Dorsolateral prefrontal cortex (tissue), 120 donors: ENCODE measurements at regions of chr9 and their contacts with region 1.

Region 1: DNA sequence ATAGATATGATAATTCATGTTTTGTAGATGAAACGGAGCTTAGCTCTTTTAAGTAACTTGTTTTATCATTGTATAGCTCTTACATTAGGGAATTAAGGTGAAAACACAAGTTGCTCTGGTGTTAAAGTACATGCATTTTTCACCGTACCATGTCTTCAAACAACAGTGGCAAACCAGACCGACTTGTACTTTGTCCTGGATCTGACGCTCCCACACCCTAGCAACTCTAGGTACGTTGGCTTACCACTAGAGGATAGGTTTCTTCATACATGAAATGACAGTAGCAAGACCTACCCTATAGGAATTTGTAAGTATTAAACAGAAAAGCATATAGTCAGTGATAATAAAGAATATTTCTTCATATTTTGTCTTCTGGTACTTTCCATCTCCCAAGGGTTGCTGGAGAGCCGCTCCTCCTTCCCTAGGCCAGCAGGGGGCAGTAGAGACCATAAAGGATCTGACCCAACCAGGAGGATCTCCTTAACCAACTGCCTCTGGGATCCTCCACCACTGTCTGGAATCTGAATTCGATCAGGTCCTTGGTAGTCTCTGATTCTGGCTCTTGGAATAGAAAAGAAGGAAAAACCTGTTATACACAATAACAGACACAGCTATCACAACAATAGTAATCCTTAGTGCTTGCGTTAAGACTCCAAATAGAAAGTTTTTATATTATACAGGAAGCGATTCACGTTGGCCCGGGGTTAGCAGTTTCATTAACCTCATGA is 136.7 kb downstream of the CAVIN4 start:
- DNase-seq: peak; percentile 58 to 86 (median 80)
- H3K4me3 ChIP-seq: peak overlapping the region; percentile 13 to 76 (median 53)
- H3K27ac ChIP-seq: peak overlapping the region in 14 of 59 donors; percentile 1 to 63 (median 27)
- H3K27me3 ChIP-seq: peaks cover 0 to 5% (median 0%) of the 10 kb centered on the region in 45 donors
- CTCF ChIP-seq: peak; percentile 79 to 99 (median 95)

Region 2: GRCh38 chr9:101028346-101029314 is 314.1 kb after region 1 on chr9 and contains the start of gene PLPPR1:
- intact Hi-C with region 1: loop called in 1 of 2 experiments (anchors 10 kb)
- DNase-seq: peak; percentile 72 to 89 (median 84)
- H3K4me3 ChIP-seq: peak within 1 kb of the TSS; percentile 54 to 91 (median 77)
- H3K27ac ChIP-seq: peak within 1 kb of the TSS in 58 of 59 donors; percentile 48 to 94 (median 85)
- H3K27me3 ChIP-seq: peaks cover 0 to 19% (median 0%) of the 10 kb centered on the region in 45 donors
- CTCF ChIP-seq: peak in 13 of 56 donors; percentile 4 to 24 (median 17)
- total RNA-seq, gene PLPPR1: 3.8 to 68.1 (median 17.9) TPM

Region 3: DNA sequence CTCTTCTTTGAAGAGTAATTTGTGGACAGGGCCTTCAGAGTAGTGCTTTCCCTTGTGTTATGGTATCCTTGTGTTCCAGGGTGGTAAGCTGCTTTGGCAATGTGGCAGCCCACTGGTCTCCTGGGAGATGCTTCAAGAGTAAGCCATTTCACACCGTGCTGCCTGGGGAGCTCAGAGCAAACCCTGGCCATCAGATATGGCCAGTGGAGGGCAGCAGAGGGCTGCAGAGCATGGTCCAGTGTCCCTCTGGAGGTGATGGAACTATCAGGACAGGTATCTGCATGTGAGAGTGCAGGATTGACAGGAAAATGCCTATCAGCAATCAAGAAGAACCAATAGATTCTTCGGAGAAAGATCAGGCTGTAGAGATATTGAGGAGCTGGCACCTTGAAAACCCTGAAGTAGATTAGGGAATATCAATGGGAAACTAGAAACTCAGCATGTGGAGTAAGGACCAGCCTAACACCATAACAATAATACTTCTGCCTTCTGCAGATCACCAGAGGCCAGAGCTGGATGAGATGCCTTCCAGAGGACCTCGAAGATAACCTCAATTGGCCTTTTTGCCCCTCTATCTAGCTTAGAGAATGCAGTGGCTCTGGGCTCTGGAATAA is 404.8 kb after region 1 on chr9:
- intact Hi-C with region 1: loop called (anchors 2 to 10 kb)
- DNase-seq: peak; percentile 43 to 83 (median 70)
- H3K4me3 ChIP-seq: no peak overlapping the region
- H3K27ac ChIP-seq: peak overlapping the region in 35 of 59 donors; percentile 6 to 77 (median 33)
- H3K27me3 ChIP-seq: no peaks in the 10 kb centered on the region
- CTCF ChIP-seq: peak; percentile 59 to 96 (median 86)

Region 4: GRCh38 chr9:101235105-101235866 is 520.8 kb after region 1 on chr9:
- intact Hi-C with region 1: loop called (anchors 2 to 10 kb)
- DNase-seq: no peak
- H3K4me3 ChIP-seq: peak overlapping the region in 31 of 59 donors; percentile 3 to 47 (median 17)
- H3K27ac ChIP-seq: peak overlapping the region in 58 of 59 donors; percentile 13 to 91 (median 81)
- H3K27me3 ChIP-seq: no peaks in the 10 kb centered on the region
- CTCF ChIP-seq: peak; percentile 59 to 94 (median 81)

Region 5: DNA sequence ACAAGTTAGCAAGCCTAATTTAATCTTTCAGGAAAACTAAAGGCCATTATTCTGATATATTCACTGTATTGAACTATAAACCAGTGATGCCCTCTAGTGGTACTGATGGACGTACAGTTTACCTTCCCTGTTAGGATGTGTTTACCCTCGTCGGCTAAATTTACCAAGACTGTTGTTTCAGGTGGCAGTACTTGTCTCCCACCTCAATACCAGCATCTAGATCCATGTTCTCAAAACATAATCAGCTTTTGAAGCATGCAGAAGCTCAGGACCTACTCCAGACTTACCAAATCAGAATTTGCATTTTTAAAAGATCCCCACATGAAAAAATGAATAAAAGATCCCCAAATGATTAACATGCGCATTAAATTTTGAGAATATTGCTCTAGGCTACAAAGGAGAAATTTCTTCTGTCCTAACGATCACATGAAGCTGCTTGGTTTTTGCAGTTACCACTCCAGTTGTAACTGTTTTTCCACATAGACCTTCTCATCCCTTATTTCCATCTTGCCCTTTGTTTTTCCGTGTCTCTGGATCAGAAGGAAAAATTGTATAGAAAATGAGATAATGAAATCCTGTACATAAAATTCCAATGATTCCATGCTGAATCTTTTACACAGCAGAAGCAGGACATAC is 673.5 kb after region 1 on chr9:
- intact Hi-C with region 1: loop called (anchors 5 to 10 kb)
- DNase-seq: no peak
- H3K4me3 ChIP-seq: peak overlapping the region in 5 of 59 donors; percentile 4 to 33 (median 10)
- H3K27ac ChIP-seq: peak overlapping the region in 56 of 59 donors; percentile 6 to 88 (median 77)
- H3K27me3 ChIP-seq: no peaks in the 10 kb centered on the region
- CTCF ChIP-seq: peak; percentile 22 to 78 (median 66)

Region 6: DNA sequence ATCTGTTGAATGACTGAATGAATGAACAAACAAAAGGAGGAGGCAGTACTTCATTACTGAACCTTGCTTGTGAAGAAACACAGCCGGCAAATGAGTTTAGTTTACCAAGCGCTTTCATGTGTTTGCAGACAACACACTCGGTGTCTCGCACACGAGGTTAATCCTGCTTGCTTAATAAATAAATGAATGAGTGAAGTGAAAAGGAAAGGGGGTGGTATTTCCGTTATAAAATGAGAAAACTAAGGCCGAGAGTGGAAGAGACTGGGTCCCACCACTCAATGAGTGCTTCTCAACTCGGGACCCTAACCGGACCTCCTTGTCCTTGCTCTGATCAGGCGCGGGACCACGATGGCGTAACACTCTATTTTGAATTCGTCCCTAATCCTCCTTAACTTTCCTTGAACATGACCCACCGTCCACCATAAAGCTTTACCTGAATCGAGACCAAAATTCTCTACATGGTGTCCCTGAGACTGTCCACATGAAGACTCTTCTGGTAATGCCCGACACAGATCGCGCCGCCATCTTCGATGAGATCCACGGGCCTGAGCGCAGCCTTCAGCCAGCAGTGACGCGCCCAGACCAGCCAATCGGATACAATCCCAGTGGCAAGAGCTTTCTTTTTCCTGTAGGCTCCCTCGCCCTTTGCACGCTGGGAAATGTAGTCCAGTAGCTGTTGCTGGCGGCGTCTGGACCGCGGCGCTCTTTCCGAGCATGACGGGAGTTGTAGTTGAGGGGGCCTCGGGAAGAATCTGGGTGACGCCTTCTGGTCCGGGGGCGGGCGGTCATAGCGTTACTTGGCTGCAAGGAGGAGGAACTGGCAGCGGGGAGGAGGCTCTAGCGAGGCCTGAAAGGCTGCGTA is 683.8 kb after region 1 on chr9 and contains the starts of genes MRPL50 and ZNF189:
- intact Hi-C with region 1: loop called in 1 of 2 experiments (anchors 10 kb)
- DNase-seq: peak; percentile 98 to 100 (median 100)
- H3K4me3 ChIP-seq: peak within 1 kb of the TSS; percentile 55 to 97 (median 85)
- H3K27ac ChIP-seq: peak within 1 kb of the TSS; percentile 49 to 96 (median 88)
- H3K27me3 ChIP-seq: no peaks in the 10 kb centered on the region
- CTCF ChIP-seq: peak in 31 of 56 donors; percentile 5 to 64 (median 35)
- total RNA-seq, gene MRPL50: 15.2 to 28.2 (median 22.3) TPM
- total RNA-seq, gene ZNF189: 30.0 to 78.6 (median 51.1) TPM